Activated CD8-positive, alpha-beta T cell treated with anti-CD3 and anti-CD28 coated beads, Interleukin-2, amount 10 ng/mL, durations not matched to agents 7 days and 5 days (primary cell): ENCODE measurements at regions of chr20 and their contacts with region 1.

Region 1: GRCh38 chr20:34516247-34517113 is at the start of gene DYNLRB1:
- DNase-seq: peak; percentile 97
- ATAC-seq: peak; percentile 88
- H3K4me3 Mint-ChIP-seq: peak within 1 kb of the TSS; percentile 98
- H3K27ac Mint-ChIP-seq: peak within 1 kb of the TSS; percentile 98
- H3K4me1 Mint-ChIP-seq: peaks cover 31% of the 10 kb centered on the region
- H3K27me3 Mint-ChIP-seq: no peaks in the 10 kb centered on the region
- total RNA-seq, gene DYNLRB1: 91.9 to 103 TPM

Region 2: GRCh38 chr20:34302723-34303528 is 213.6 kb before region 1 on chr20 and contains the start of gene AHCY:
- CTCF ChIA-PET with region 1: interaction called, 13 read pairs
- POLR2A ChIA-PET with region 1: interaction called, 5 read pairs
- DNase-seq: peak; percentile 96
- ATAC-seq: peak; percentile 97
- H3K4me3 Mint-ChIP-seq: peak within 1 kb of the TSS; percentile 87
- H3K27ac Mint-ChIP-seq: peak within 1 kb of the TSS; percentile 91
- H3K4me1 Mint-ChIP-seq: peaks cover 24% of the 10 kb centered on the region
- H3K27me3 Mint-ChIP-seq: peaks cover 2% of the 10 kb centered on the region
- total RNA-seq, gene AHCY: 90.2 to 94.4 TPM

Region 3: DNA sequence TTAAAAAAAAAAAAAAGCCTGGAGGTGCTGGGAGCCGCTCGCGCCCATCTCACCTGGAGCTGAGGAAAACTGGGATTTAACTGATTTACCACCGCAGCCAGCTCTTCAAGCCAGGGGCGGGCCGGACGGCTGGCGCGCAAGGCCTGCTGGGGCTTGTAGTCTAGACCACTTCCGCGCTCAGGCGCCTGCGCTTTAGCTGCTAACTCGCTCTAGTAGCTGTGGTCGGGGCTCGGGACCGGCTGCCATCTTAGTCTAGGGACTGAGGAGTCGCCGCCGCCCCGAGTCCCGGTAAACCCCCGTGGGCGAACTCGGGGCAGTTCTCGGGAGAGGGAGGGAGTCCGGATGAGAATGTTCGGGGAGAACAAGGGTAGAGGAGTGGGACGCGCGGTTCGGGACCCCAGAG is 153.4 kb before region 1 on chr20 and contains the start of gene ITCH:
- CTCF ChIA-PET with region 1: interaction called, 6 read pairs
- POLR2A ChIA-PET with region 1: interaction called, 14 read pairs
- DNase-seq: peak; percentile 95
- ATAC-seq: peak; percentile 98
- H3K4me3 Mint-ChIP-seq: peak within 1 kb of the TSS; percentile 93
- H3K27ac Mint-ChIP-seq: peak within 1 kb of the TSS; percentile 96
- H3K4me1 Mint-ChIP-seq: peaks cover 46% of the 10 kb centered on the region
- H3K27me3 Mint-ChIP-seq: no peaks in the 10 kb centered on the region
- total RNA-seq, gene ITCH: 52.1 to 59.9 TPM

Region 4: GRCh38 chr20:34538671-34539123 is 22.2 kb after region 1 on chr20:
- CTCF ChIA-PET with region 1: interaction called, 11 read pairs
- POLR2A ChIA-PET with region 1: no interaction called
- DNase-seq: peak; percentile 66
- ATAC-seq: peak; percentile 66
- H3K4me3 Mint-ChIP-seq: no peak overlapping the region
- H3K27ac Mint-ChIP-seq: no peak overlapping the region
- H3K4me1 Mint-ChIP-seq: peaks cover 2% of the 10 kb centered on the region
- H3K27me3 Mint-ChIP-seq: no peaks in the 10 kb centered on the region

Region 5: GRCh38 chr20:34669094-34669493 is 152.6 kb after region 1 on chr20:
- CTCF ChIA-PET with region 1: no interaction called
- POLR2A ChIA-PET with region 1: no interaction called
- DNase-seq: no peak
- ATAC-seq: no peak
- H3K4me3 Mint-ChIP-seq: no peak overlapping the region
- H3K27ac Mint-ChIP-seq: no peak overlapping the region
- H3K4me1 Mint-ChIP-seq: no peaks in the 10 kb centered on the region
- H3K27me3 Mint-ChIP-seq: no peaks in the 10 kb centered on the region